Colonic mucosa (tissue), 4 donors: ENCODE measurements at regions of chr1 and their contacts with region 1.

Region 1: GRCh38 chr1:40849801-40850592 is 12.2 kb downstream of the CITED4 start:
- DNase-seq: peak; percentile 71
- H3K4me3 ChIP-seq: no peak overlapping the region
- H3K27ac ChIP-seq: no peak overlapping the region
- H3K4me1 ChIP-seq: no peaks in the 10 kb centered on the region
- H3K27me3 ChIP-seq: no peaks in the 10 kb centered on the region
- CTCF ChIP-seq: peak; percentile 89

Region 2: GRCh38 chr1:40612345-40612831 is 237.6 kb before region 1 on chr1:
- intact Hi-C with region 1: loop called (anchors 5 kb)
- DNase-seq: peak; percentile 88
- H3K4me3 ChIP-seq: no peak overlapping the region
- H3K27ac ChIP-seq: no peak overlapping the region
- H3K4me1 ChIP-seq: no peaks in the 10 kb centered on the region
- H3K27me3 ChIP-seq: no peaks in the 10 kb centered on the region
- CTCF ChIP-seq: peak; percentile 86

Region 3: DNA sequence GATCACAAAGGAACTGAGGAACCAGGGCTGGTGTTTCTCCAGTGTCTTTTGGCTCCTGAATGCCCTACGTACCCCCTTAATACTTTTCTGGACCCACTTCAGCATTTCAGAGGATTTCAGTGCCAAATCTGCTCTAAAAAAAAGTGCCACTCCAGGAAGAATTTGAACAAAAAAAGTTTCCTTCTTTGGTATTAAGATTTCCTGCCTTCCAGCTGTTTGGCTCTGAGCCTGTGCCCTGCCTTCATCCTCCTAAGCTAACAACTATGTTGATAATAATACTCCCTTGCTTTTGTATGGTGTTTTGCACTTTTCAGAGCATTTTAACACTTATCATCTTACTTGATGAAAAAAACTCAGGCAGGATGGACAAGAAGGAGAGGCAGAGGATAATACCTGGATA is 173.5 kb before region 1 on chr1:
- intact Hi-C with region 1: loop called (anchors 10 kb)
- DNase-seq: no peak
- H3K4me3 ChIP-seq: no peak overlapping the region
- H3K27ac ChIP-seq: no peak overlapping the region
- H3K4me1 ChIP-seq: no peaks in the 10 kb centered on the region
- H3K27me3 ChIP-seq: no peaks in the 10 kb centered on the region
- CTCF ChIP-seq: no peak

Region 4: GRCh38 chr1:40774266-40774998 is 75.6 kb before region 1 on chr1:
- intact Hi-C with region 1: loop called (anchors 2 kb)
- DNase-seq: peak; percentile 63
- H3K4me3 ChIP-seq: no peak overlapping the region
- H3K27ac ChIP-seq: no peak overlapping the region
- H3K4me1 ChIP-seq: no peaks in the 10 kb centered on the region
- H3K27me3 ChIP-seq: no peaks in the 10 kb centered on the region
- CTCF ChIP-seq: peak; percentile 82

Region 5: DNA sequence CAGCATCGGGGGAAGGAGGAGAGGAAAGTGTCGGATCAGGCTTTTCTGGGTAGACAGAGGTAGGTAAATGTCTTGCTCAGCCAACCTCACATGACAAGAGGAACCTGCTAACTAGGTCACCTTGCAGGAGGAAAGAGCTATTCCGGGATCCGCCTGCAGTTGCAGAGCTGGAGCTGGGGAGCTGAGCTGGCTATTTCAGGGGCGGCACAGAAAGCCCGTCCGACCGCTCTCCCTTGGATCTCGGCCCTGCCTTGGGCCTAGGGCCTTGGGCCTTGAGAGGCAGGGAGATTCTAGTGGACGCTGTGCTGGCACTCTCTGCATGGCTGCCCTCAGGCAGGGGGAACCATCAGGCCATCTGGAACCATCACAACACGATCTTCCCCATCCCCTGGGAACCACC is 73.0 kb after region 1 on chr1:
- intact Hi-C with region 1: no loop called
- DNase-seq: no peak
- H3K4me3 ChIP-seq: no peak overlapping the region
- H3K27ac ChIP-seq: no peak overlapping the region
- H3K4me1 ChIP-seq: no peaks in the 10 kb centered on the region
- H3K27me3 ChIP-seq: no peaks in the 10 kb centered on the region
- CTCF ChIP-seq: no peak

Region 6: GRCh38 chr1:40951943-40952743 is 102.1 kb after region 1 on chr1:
- intact Hi-C with region 1: loop called (anchors 2 kb)
- DNase-seq: peak; percentile 75
- H3K4me3 ChIP-seq: no peak overlapping the region
- H3K27ac ChIP-seq: no peak overlapping the region
- H3K4me1 ChIP-seq: no peaks in the 10 kb centered on the region
- H3K27me3 ChIP-seq: no peaks in the 10 kb centered on the region
- CTCF ChIP-seq: peak; percentile 83